ENCODE measurements at regions of chr15 and their contacts with region 1.

Region 1: GRCh38 chr15:82966671-82967071 is 14.2 kb upstream of the HOMER2 start:
- DNase-seq: no peak
- ATAC-seq: no peak
- H3K4me3 ChIP-seq: no peak overlapping the region
- H3K27ac ChIP-seq: peak overlapping the region in 1 of 4 donors; percentile 13
- H3K4me1 ChIP-seq: peaks cover 38 to 39% of the 10 kb centered on the region in 2 donors
- H3K27me3 ChIP-seq: no peaks in the 10 kb centered on the region
- CTCF ChIP-seq: no peak
- POLR2A ChIP-seq: no peak

Region 2: DNA sequence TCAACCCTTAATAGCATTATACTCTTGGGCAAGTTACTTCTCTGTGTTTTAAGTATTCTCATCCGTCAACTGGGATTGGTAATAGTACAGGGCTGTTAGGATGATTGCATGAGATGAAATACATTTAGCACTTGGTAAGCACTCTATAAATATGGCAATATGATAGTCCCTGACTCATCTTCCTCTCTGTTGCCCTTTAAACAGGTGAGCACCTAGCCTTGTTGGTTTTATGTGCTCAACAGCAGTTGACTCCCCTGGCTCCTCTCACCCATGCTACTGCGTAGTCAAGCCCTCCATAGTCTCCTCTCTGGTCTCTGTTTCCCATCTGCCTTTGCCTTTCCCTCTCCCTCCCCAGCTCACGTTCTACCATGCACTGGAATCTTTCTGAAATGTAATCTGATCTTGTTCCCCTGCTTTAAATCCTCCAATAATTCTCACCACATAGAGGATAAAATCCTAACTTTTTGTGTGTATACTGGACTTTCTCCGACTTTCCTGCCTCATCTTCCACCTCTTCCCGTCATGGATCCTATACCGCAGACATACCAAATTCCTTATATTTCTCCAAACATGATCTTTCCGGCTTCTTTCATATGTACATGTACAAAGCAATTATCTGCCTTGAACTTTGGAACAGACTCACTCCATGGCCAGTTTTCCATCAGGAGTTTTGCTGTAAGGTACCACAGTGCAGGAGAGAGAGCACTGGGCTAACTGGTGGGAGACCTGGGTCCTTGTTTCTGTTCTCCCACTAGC is 203.1 kb before region 1 on chr15:
- in situ Hi-C with region 1: no loop called
- intact Hi-C with region 1: loop called (anchors 5 kb)
- DNase-seq: peak; percentile 65 to 81
- ATAC-seq: peak; percentile 85 to 92
- H3K4me3 ChIP-seq: no peak overlapping the region
- H3K27ac ChIP-seq: peak overlapping the region; percentile 88 to 96 (median 92)
- H3K4me1 ChIP-seq: peaks cover 50 to 81% of the 10 kb centered on the region in 2 donors
- H3K27me3 ChIP-seq: no peaks in the 10 kb centered on the region
- CTCF ChIP-seq: no peak
- POLR2A ChIP-seq: peak; percentile 75 to 84

Region 3: DNA sequence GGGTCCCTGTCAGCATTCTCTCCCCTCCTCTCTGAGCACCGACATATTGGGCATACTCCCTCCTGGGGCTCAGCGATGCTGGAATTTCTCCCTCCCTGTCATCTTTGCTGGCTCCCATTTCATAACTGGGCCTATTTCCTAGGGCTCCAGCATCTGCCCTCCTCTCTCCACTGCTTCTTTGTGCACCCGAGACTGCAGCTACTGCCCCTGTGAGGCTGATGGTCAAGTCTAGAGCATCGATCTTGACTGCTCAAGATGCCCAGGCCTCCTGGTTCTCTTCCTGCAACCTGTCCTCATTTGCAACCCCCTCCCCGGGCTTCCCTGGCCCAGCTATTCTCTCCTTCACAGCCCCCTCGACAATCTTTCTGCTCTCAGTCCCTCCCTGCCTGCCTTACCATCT is 103.8 kb before region 1 on chr15:
- in situ Hi-C with region 1: loop called in 1 of 4 experiments (anchors 10 kb)
- intact Hi-C with region 1: no loop called
- DNase-seq: no peak
- ATAC-seq: no peak
- H3K4me3 ChIP-seq: no peak overlapping the region
- H3K27ac ChIP-seq: no peak overlapping the region
- H3K4me1 ChIP-seq: no peaks in the 10 kb centered on the region
- H3K27me3 ChIP-seq: no peaks in the 10 kb centered on the region
- CTCF ChIP-seq: no peak
- POLR2A ChIP-seq: no peak

Region 4: DNA sequence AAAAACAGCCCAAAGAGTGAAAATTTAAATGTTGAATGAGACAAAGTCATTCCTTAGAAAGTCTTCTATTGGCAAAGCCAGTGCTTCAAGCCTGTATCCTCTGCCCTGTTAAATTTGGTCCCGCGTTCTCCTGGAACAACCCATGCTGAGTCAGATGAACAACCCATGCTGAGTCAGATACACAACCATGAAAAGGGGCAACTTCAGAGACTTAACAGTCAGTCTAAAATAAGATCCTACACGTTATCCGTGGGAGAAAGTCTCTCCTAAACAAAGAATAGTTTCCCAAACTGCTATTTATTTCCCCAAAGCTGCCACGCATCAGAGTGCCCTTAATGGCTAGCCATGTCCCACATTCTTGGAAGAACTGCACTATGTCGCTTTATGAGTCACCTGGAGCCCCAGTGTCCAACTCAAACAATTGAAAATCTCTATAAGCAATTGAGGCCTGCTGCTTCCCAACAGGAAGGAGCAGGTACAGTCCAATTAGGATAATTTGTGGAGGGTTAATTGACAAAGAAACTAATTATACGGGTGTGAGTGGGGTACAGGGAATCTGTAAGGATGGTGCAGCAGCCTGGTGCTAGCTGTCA is 91.2 kb before region 1 on chr15:
- in situ Hi-C with region 1: no loop called
- intact Hi-C with region 1: loop called (anchors 5 kb)
- DNase-seq: no peak
- ATAC-seq: peak; percentile 21 to 49
- H3K4me3 ChIP-seq: no peak overlapping the region
- H3K27ac ChIP-seq: peak overlapping the region; percentile 26 to 76 (median 61)
- H3K4me1 ChIP-seq: peaks cover 16 to 40% of the 10 kb centered on the region in 2 donors
- H3K27me3 ChIP-seq: no peaks in the 10 kb centered on the region
- CTCF ChIP-seq: no peak
- POLR2A ChIP-seq: no peak

Region 5: GRCh38 chr15:83036253-83036652 is 69.6 kb after region 1 on chr15:
- in situ Hi-C with region 1: no loop called
- intact Hi-C with region 1: no loop called
- DNase-seq: no peak
- ATAC-seq: no peak
- H3K4me3 ChIP-seq: no peak overlapping the region
- H3K27ac ChIP-seq: peak overlapping the region in 2 of 4 donors; percentile 47 to 50
- H3K4me1 ChIP-seq: peaks cover 0 to 5% of the 10 kb centered on the region in 2 donors
- H3K27me3 ChIP-seq: no peaks in the 10 kb centered on the region
- CTCF ChIP-seq: no peak
- POLR2A ChIP-seq: no peak

Measured in gastrocnemius medialis (tissue), 4 donors.